ENCODE measurements at regions of chr17 and their contacts with region 1.

Region 1: GRCh38 chr17:64133546-64134215 is 3.7 kb upstream of the ERN1 start:
- DNase-seq: no peak
- ATAC-seq: no peak

Region 2: GRCh38 chr17:64025732-64026294 is 107.9 kb before region 1 on chr17:
- intact Hi-C with region 1: loop called (anchors 2 kb)
- DNase-seq: peak; percentile 87
- ATAC-seq: peak; percentile 83

Measured in Right ventricle myocardium superior (tissue), 1 donor.